H1 (cell line): ENCODE measurements at regions of chr6 and their contacts with region 1.

Region 1: GRCh38 chr6:51996296-51996947 is 91.0 kb downstream of the PKHD1 start:
- DNase-seq: no peak
- H3K4me3 ChIP-seq: no peak overlapping the region
- H3K27ac ChIP-seq: no peak overlapping the region
- H3K4me1 ChIP-seq: peaks cover 0 to 2% (median 0%) of the 10 kb centered on the region in 4 experiments; a peak in 1 of 7 replicates
- H3K27me3 ChIP-seq: no peaks in the 10 kb centered on the region
- CTCF ChIP-seq: no peak
- EP300 ChIP-seq: no peak
- POLR2A ChIP-seq: no peak
- RAD21 ChIP-seq: no peak

Region 2: GRCh38 chr6:52013035-52013434 is 16.6 kb after region 1 on chr6:
- CTCF ChIA-PET with region 1: interaction called, 11 read pairs
- POLR2A ChIA-PET with region 1: no interaction called
- DNase-seq: no peak
- H3K4me3 ChIP-seq: no peak overlapping the region
- H3K27ac ChIP-seq: no peak overlapping the region
- H3K4me1 ChIP-seq: 0 out of 7 replicates have a peak, but pooled peaks cover 0 to 3% (median 1%) of the 10 kb centered on the region in 4 experiments
- H3K27me3 ChIP-seq: no peaks in the 10 kb centered on the region
- CTCF ChIP-seq: no peak
- EP300 ChIP-seq: no peak
- POLR2A ChIP-seq: no peak
- RAD21 ChIP-seq: no peak

Region 3: DNA sequence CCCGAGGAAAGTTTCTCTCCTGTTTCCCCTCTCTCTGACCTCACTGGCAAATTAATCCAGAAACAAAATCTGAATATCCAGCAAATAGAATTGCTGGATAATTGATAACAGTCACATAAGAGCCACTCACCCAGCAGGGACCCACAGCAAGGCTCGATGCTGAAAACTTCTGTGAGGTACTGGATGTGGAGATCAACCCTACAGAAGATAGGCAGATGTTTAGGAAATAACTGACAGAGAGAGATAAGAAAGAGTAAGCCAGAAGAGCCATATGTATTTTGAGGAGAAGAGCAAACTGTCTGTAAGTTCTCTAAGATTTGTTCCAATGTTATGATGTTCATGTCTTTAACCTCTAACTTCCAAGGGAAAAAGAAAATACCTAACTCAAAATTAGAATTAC is 31.3 kb after region 1 on chr6:
- CTCF ChIA-PET with region 1: no interaction called
- POLR2A ChIA-PET with region 1: no interaction called
- DNase-seq: no peak
- H3K4me3 ChIP-seq: no peak overlapping the region
- H3K27ac ChIP-seq: no peak overlapping the region
- H3K4me1 ChIP-seq: no peaks in the 10 kb centered on the region
- H3K27me3 ChIP-seq: no peaks in the 10 kb centered on the region
- CTCF ChIP-seq: no peak
- EP300 ChIP-seq: no peak
- POLR2A ChIP-seq: no peak
- RAD21 ChIP-seq: no peak